K562 (cell line): ENCODE measurements at regions of chr10 and their contacts with region 1.

Region 1: DNA sequence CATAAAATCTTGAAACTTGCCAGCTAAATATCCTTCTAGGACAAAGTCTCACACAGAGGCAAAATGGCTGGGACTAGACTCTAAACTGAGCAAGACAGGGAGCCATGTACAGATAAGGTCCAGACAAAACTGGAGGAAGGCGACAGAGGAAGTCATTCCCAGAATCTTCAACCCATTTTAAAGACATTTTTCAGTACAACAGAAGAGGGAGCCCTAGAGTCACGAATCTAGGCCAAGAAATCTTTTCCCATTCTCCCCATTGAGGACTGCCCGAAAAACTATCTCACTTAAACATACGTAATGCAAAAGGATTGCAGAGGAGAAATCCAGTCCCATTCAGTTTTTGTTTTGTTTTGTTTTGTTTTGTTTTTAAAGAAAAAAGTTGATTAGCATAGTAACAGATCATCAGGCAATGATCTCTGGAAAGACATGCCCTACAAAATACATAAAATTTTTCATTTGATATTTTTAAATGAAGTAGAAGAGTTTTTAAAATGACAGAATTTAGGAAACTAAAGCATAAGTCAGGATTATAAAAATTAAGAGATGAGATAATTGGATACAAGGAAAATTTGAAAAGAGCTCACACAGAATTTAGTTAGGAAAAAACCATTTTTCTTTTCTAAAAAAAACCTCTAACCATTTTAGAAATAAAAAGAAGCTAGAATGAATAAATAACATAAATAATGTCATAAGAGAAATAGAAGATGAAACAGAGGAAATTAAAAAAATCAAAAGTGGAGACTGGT is 16.9 kb upstream of the PRF1 start:
- DNase-seq: peak; percentile 83 to 88 (median 84)
- ATAC-seq: peak; percentile 83
- H3K4me3 ChIP-seq: no peak overlapping the region
- H3K27ac ChIP-seq: no peak overlapping the region; the same call in 2 of the 3 replicates
- H3K4me1 ChIP-seq: peaks cover 7 to 27% of the 10 kb centered on the region in 2 experiments
- H3K27me3 ChIP-seq: no peaks in the 10 kb centered on the region
- CTCF ChIP-seq: peak; percentile 69 to 91 (median 79)
- EP300 ChIP-seq: peak; percentile 60
- POLR2A ChIP-seq: no peak
- RAD21 ChIP-seq: peak; percentile 91 to 99

Region 2: DNA sequence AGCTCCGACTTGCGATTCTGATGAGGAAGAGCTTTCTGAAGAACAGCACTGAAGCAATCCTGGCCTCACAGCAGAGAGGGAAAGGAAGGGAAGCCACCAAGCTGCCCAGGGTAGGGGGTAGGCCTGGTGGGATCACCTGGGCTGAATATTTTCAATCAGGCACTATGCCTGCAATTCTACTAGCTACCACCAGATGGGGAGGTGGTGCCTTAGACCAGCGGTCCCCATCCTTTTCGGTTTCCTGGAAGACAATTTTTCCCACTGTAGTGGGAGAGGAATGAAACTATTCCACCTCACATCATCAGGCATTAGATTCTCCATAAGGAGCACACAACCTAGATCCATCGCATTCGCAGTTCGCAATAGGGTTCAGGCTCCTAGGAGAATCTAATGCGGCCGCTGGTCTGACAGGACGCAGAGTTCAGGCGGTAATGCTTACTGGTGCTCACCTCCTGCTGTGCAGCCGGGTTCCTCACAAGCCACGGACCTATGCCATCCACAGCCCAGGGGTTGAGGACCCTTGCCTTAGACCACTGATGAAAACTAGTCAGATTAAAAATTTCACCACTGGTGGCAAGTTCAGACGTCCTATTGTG is 239.8 kb before region 1 on chr10:
- CTCF ChIA-PET with region 1: no interaction called
- POLR2A ChIA-PET with region 1: no interaction called
- in situ Hi-C with region 1: no loop called
- intact Hi-C with region 1: no loop called
- DNase-seq: peak; percentile 52 to 83 (median 76)
- ATAC-seq: no peak
- H3K4me3 ChIP-seq: no peak overlapping the region
- H3K27ac ChIP-seq: no peak overlapping the region
- H3K4me1 ChIP-seq: peaks cover 12 to 27% of the 10 kb centered on the region in 2 experiments; a peak in 4 of 5 replicates
- H3K27me3 ChIP-seq: no peaks in the 10 kb centered on the region
- CTCF ChIP-seq: peak; percentile 79 to 94 (median 83)
- EP300 ChIP-seq: no peak
- POLR2A ChIP-seq: no peak
- RAD21 ChIP-seq: peak; percentile 54 to 73; a peak in 3 of 4 replicates

Region 3: GRCh38 chr10:70549962-70550458 is 69.4 kb before region 1 on chr10:
- CTCF ChIA-PET with region 1: no interaction called
- POLR2A ChIA-PET with region 1: no interaction called
- in situ Hi-C with region 1: no loop called
- intact Hi-C with region 1: loop called (anchors 1 kb)
- DNase-seq: peak; percentile 82 to 87 (median 84)
- ATAC-seq: peak; percentile 97
- H3K4me3 ChIP-seq: no peak overlapping the region
- H3K27ac ChIP-seq: no peak overlapping the region
- H3K4me1 ChIP-seq: peaks cover 8 to 13% of the 10 kb centered on the region in 2 experiments
- H3K27me3 ChIP-seq: no peaks in the 10 kb centered on the region
- CTCF ChIP-seq: peak; percentile 92 to 96 (median 95)
- EP300 ChIP-seq: no peak
- POLR2A ChIP-seq: no peak
- RAD21 ChIP-seq: peak; percentile 98 to 99

Region 4: GRCh38 chr10:70575874-70576802 is 43.3 kb before region 1 on chr10:
- CTCF ChIA-PET with region 1: no interaction called
- POLR2A ChIA-PET with region 1: no interaction called
- in situ Hi-C with region 1: no loop called
- intact Hi-C with region 1: loop called (anchors 5 kb)
- DNase-seq: peak; percentile 64 to 92 (median 78)
- ATAC-seq: peak; percentile 92
- H3K4me3 ChIP-seq: no peak overlapping the region
- H3K27ac ChIP-seq: peak overlapping the region; percentile 70
- H3K4me1 ChIP-seq: peaks cover 40 to 57% of the 10 kb centered on the region in 2 experiments
- H3K27me3 ChIP-seq: no peaks in the 10 kb centered on the region
- CTCF ChIP-seq: no peak
- EP300 ChIP-seq: peak; percentile 86
- POLR2A ChIP-seq: no peak
- RAD21 ChIP-seq: no peak; a peak in 2 of 4 replicates

Region 5: GRCh38 chr10:70742537-70743429 is 123.3 kb after region 1 on chr10:
- CTCF ChIA-PET with region 1: no interaction called
- POLR2A ChIA-PET with region 1: no interaction called
- in situ Hi-C with region 1: loop called (anchors 5 kb)
- intact Hi-C with region 1: no loop called
- DNase-seq: peak; percentile 62 to 89 (median 76)
- ATAC-seq: peak; percentile 59
- H3K4me3 ChIP-seq: peak overlapping the region; percentile 0; the same call in 1 of the 2 replicates
- H3K27ac ChIP-seq: peak overlapping the region; percentile 75
- H3K4me1 ChIP-seq: peaks cover 59 to 62% of the 10 kb centered on the region in 2 experiments
- H3K27me3 ChIP-seq: no peaks in the 10 kb centered on the region
- CTCF ChIP-seq: no peak
- EP300 ChIP-seq: peak; percentile 95
- POLR2A ChIP-seq: no peak
- RAD21 ChIP-seq: peak in 1 of 2 experiments; percentile 26; a peak in 1 of 4 replicates

Region 6: GRCh38 chr10:70815504-70816219 is 196.2 kb after region 1 on chr10 and contains the start of gene SGPL1:
- CTCF ChIA-PET with region 1: no interaction called
- POLR2A ChIA-PET with region 1: no interaction called
- in situ Hi-C with region 1: no loop called
- intact Hi-C with region 1: loop called (anchors 5 kb)
- DNase-seq: peak; percentile 91 to 99 (median 98)
- ATAC-seq: peak; percentile 90
- H3K4me3 ChIP-seq: peak within 1 kb of the TSS; percentile 80
- H3K27ac ChIP-seq: peak within 1 kb of the TSS; percentile 43; the same call in 2 of the 3 replicates
- H3K4me1 ChIP-seq: peaks cover 22 to 25% of the 10 kb centered on the region in 2 experiments
- H3K27me3 ChIP-seq: no peaks in the 10 kb centered on the region
- CTCF ChIP-seq: peak; percentile 90 to 98 (median 97)
- EP300 ChIP-seq: no peak
- POLR2A ChIP-seq: peak; percentile 63
- RAD21 ChIP-seq: peak; percentile 96 to 98
- polyA plus RNA-seq, gene SGPL1: 8.5 to 9.1 TPM

Region 7: DNA sequence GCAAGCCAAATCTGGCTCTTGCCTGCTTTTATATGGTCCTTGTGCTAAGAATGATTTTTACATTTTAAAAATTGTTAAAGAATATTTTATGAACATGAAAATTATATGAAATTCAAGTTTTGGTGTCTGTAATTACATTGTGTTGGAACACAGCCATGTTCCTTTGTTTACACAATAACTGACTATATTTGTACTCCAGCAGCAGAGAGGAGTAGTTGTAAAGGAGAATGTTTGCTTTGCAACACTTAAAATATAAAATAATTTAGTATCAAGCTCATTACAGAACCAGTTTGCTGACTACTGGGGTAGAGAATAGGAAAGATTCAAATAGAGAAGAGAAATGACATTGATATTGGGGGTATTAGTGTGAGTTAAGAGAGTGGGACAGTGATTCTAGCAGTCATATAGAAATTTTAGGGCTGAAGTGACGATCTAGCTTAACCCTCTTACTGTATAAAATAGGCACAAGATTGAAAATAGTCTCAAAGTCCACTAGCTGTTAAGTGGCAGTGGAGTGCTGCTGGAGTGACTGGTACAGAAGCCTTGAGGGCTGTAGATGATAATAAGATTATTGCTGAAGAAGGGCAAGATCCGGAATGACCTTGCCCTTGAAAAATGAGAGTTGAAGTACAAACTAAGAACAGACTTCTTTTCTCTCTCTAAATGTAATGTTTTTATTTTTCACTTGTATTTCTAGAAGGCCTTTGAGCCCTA is 224.5 kb after region 1 on chr10:
- CTCF ChIA-PET with region 1: no interaction called
- POLR2A ChIA-PET with region 1: no interaction called
- in situ Hi-C with region 1: no loop called
- intact Hi-C with region 1: no loop called
- DNase-seq: no peak
- ATAC-seq: no peak
- H3K4me3 ChIP-seq: no peak overlapping the region
- H3K27ac ChIP-seq: no peak overlapping the region
- H3K4me1 ChIP-seq: peaks cover 0 to 13% of the 10 kb centered on the region in 2 experiments; a peak in 2 of 5 replicates
- H3K27me3 ChIP-seq: no peaks in the 10 kb centered on the region
- CTCF ChIP-seq: no peak
- EP300 ChIP-seq: no peak
- POLR2A ChIP-seq: no peak
- RAD21 ChIP-seq: no peak

Region 8: GRCh38 chr10:71068861-71069271 is 449.4 kb after region 1 on chr10:
- CTCF ChIA-PET with region 1: no interaction called
- POLR2A ChIA-PET with region 1: no interaction called
- in situ Hi-C with region 1: no loop called
- intact Hi-C with region 1: no loop called
- DNase-seq: no peak
- ATAC-seq: no peak
- H3K4me3 ChIP-seq: no peak overlapping the region
- H3K27ac ChIP-seq: no peak overlapping the region
- H3K4me1 ChIP-seq: no peaks in the 10 kb centered on the region; a peak in 1 of 5 replicates
- H3K27me3 ChIP-seq: peaks cover 35 to 92% of the 10 kb centered on the region in 2 experiments; a peak in 4 of 5 replicates
- CTCF ChIP-seq: no peak
- EP300 ChIP-seq: no peak
- POLR2A ChIP-seq: no peak
- RAD21 ChIP-seq: no peak